Calu3 (cell line): ENCODE measurements at regions of chr5 and their contacts with region 1.

Region 1: DNA sequence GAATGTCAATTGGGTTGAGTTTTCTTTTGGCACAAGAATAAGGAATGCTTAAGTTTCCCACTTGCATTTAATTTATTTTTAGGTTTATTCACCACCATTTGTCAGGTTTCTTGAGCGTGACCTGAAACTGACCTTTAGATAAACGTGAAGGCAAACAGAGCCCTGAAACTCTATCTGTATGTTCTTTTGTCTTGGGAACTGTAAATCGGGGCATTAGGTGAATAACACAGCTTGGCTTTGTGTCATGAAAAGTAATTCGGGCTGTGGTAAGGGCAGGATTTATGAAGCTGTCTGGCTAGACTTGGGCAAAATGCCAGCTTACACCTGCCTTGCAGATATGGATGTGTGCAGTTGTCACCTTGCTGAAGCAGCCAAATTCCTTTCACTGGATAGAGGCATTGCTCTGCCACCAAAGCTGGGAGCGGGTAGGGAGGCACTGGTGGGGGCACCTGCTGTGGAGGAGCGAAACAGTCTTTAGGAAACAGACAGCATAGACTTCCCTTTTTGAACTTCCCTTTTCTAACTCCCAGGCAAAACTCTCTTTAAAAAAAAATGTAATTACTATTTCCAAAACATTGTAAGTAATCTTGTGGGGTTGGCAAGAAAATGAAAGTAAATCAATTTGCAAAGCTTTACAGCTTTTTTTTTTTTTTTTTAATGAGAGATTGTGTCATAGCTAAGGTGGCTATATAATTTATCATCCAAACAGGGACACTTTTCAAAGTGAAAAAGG is 545.2 kb downstream of the CSNK1G3 start:
- DNase-seq: peak; percentile 77
- H3K4me3 Mint-ChIP-seq: peak overlapping the region; percentile 64
- H3K27ac Mint-ChIP-seq: peak overlapping the region; percentile 81
- H3K4me1 Mint-ChIP-seq: peaks cover 42% of the 10 kb centered on the region
- H3K27me3 Mint-ChIP-seq: no peaks in the 10 kb centered on the region
- CTCF ChIP-seq: no peak

Region 2: GRCh38 chr5:124402144-124402581 is 345.0 kb after region 1 on chr5:
- CTCF ChIA-PET with region 1: no interaction called
- intact Hi-C with region 1: loop called (anchors 10 kb)
- DNase-seq: peak; percentile 58
- H3K4me3 Mint-ChIP-seq: no peak overlapping the region
- H3K27ac Mint-ChIP-seq: peak overlapping the region; percentile 74
- H3K4me1 Mint-ChIP-seq: peaks cover 27% of the 10 kb centered on the region
- H3K27me3 Mint-ChIP-seq: no peaks in the 10 kb centered on the region
- CTCF ChIP-seq: no peak

Region 3: DNA sequence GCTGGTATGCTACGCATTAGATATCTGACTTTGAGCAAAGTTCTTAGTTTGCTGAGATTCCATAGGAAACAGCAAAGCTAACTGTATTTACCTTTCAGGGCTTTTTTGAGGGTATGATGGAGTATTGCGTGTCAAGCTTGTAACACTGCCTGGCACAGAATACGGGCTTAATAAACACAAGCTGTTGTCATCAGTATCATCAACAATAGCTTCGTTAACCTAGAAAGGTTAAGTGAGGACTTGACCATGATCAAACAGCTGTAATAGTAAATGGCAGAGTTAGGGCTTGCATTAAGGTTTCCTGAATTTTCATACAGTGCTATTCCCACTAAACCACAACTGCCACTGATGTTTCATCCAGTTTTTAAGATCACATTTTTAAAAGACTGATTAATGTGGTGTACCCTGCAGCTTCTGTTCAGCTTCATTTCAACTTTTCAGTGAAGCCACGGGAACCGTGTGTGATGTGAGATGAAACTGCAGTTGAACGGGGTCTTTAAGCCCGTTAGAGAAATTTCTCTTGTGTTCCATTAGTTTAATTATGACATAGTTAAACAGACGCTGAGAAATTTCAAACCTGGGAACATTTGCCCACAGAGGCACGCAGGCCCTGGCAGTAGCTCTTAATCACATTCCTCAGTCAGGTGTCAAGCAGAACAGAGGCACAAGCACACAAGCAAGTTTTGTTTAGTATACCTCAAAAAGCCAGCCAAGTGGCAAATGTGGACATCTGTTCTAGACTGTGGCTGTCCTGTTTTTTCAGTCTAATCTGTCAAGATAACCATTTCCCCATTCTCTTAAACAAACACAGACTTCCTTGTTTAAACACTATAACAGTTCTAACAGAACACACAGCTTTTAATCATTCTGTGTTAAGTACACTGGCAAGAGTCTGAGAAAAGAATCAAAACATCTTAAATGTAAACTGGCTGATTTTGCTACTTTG is 542.1 kb after region 1 on chr5:
- CTCF ChIA-PET with region 1: no interaction called
- intact Hi-C with region 1: loop called (anchors 10 kb)
- DNase-seq: peak; percentile 67
- H3K4me3 Mint-ChIP-seq: peak overlapping the region; percentile 24
- H3K27ac Mint-ChIP-seq: peak overlapping the region; percentile 74
- H3K4me1 Mint-ChIP-seq: peaks cover 43% of the 10 kb centered on the region
- H3K27me3 Mint-ChIP-seq: no peaks in the 10 kb centered on the region
- CTCF ChIP-seq: no peak

Region 4: GRCh38 chr5:124655922-124656511 is 598.9 kb after region 1 on chr5:
- CTCF ChIA-PET with region 1: interaction called, 4 read pairs
- intact Hi-C with region 1: loop called (anchors 5 kb)
- DNase-seq: peak; percentile 64
- H3K4me3 Mint-ChIP-seq: no peak overlapping the region
- H3K27ac Mint-ChIP-seq: no peak overlapping the region
- H3K4me1 Mint-ChIP-seq: peaks cover 64% of the 10 kb centered on the region
- H3K27me3 Mint-ChIP-seq: no peaks in the 10 kb centered on the region
- CTCF ChIP-seq: no peak